ENCODE measurements at regions of chr19 and their contacts with region 1.

Region 1: DNA sequence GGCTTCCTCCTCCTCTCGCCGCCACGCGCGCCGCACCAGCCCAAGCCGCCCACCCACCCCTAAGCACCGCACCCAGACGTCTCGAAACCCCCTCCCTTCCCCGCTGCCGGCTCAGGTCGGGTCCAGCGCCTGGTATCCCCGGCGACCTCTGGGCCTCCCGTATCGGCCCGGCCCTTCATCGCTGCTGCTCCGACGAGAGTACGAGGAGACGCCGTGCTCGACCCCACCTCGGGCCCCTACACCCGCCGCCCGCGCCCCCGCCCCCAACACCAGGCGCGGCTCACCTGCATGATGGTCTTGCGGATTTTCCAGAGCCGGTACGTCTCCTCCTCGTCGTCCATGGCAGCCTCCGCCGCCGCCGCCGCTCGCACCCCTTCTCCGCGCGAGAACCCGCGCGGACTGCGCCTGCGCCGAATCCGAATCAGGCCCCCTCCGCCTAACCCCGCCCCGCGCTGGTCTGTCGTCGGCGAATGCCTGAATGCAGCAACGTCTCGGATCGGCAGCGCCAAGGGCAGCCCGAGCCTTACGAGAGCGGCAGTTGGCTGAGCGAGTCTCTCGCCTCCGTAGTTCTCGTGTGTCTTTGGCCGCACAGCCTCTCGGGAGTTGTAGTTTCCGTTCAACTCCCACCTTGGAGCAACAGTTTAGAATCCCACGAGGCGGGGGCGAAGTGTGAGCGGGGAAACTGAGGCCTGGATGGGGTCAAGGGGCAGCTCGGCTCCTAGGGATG is at the start of gene POLR2E:
- DNase-seq: peak; percentile 94

Region 2: GRCh38 chr19:970695-971094 is 124.4 kb before region 1 on chr19:
- CTCF ChIA-PET with region 1: no interaction called
- POLR2A ChIA-PET with region 1: no interaction called
- DNase-seq: peak; percentile 39

Region 3: GRCh38 chr19:1035998-1036621 is 59.0 kb before region 1 on chr19:
- CTCF ChIA-PET with region 1: no interaction called
- POLR2A ChIA-PET with region 1: no interaction called
- DNase-seq: no peak

Region 4: GRCh38 chr19:1084024-1084868 is 10.9 kb before region 1 on chr19:
- CTCF ChIA-PET with region 1: no interaction called
- POLR2A ChIA-PET with region 1: interaction called, 11 read pairs
- DNase-seq: no peak

Region 5: GRCh38 chr19:1223018-1223855 is 128.1 kb after region 1 on chr19:
- CTCF ChIA-PET with region 1: no interaction called
- POLR2A ChIA-PET with region 1: no interaction called
- DNase-seq: peak; percentile 65

Measured in HEK293T (cell line).